ENCODE measurements at regions of chr3 and their contacts with region 1.

Region 1: GRCh38 chr3:49445381-49445780 is 16.3 kb upstream of the NICN1 start:
- DNase-seq: no peak
- ATAC-seq: no peak
- H3K4me3 ChIP-seq: no peak overlapping the region
- H3K4me3 Mint-ChIP-seq: no peak overlapping the region
- H3K27ac ChIP-seq: no peak overlapping the region
- H3K27ac Mint-ChIP-seq: no peak overlapping the region
- H3K4me1 ChIP-seq: peaks cover 21% of the 10 kb centered on the region
- H3K4me1 Mint-ChIP-seq: peaks cover 14% of the 10 kb centered on the region
- H3K27me3 ChIP-seq: no peaks in the 10 kb centered on the region
- H3K27me3 Mint-ChIP-seq: no peaks in the 10 kb centered on the region
- CTCF ChIP-seq: no peak

Region 2: DNA sequence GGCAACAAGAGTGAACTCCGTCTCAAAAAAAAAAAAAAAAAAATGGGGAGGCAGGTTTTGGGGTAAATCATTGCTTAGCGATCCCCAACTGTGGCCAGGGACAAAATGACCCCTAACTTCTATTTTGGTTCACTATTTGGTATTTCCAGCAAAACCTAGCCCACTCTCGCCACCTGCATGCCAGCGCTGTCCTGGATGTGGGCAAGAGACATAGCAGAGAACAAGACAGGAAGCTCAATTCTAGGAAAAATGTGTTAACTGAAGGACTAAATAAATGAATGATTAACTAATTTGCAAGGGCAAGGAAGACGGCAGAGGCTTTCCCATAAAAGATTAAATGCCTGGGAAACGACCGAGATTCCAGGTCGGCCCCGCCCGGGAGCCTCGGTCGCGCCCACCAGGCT is 16.7 kb before region 1 on chr3:
- CTCF ChIA-PET with region 1: interaction called, 8 read pairs
- POLR2A ChIA-PET with region 1: interaction called, 13 read pairs
- intact Hi-C with region 1: no loop called
- DNase-seq: peak in 2 of 14 experiments; percentile 24 to 32
- ATAC-seq: peak; percentile 2
- H3K4me3 ChIP-seq: peak overlapping the region; percentile 60
- H3K4me3 Mint-ChIP-seq: peak overlapping the region; percentile 95
- H3K27ac ChIP-seq: peak overlapping the region; percentile 66 to 85
- H3K27ac Mint-ChIP-seq: peak overlapping the region; percentile 89
- H3K4me1 ChIP-seq: peaks cover 33% of the 10 kb centered on the region
- H3K4me1 Mint-ChIP-seq: peaks cover 32% of the 10 kb centered on the region
- H3K27me3 ChIP-seq: no peaks in the 10 kb centered on the region
- H3K27me3 Mint-ChIP-seq: no peaks in the 10 kb centered on the region
- CTCF ChIP-seq: no peak

Measured in CD4-positive, alpha-beta T cell (primary cell).